Mammary epithelial cell (primary cell): ENCODE measurements at regions of chr3 and their contacts with region 1.

Region 1: DNA sequence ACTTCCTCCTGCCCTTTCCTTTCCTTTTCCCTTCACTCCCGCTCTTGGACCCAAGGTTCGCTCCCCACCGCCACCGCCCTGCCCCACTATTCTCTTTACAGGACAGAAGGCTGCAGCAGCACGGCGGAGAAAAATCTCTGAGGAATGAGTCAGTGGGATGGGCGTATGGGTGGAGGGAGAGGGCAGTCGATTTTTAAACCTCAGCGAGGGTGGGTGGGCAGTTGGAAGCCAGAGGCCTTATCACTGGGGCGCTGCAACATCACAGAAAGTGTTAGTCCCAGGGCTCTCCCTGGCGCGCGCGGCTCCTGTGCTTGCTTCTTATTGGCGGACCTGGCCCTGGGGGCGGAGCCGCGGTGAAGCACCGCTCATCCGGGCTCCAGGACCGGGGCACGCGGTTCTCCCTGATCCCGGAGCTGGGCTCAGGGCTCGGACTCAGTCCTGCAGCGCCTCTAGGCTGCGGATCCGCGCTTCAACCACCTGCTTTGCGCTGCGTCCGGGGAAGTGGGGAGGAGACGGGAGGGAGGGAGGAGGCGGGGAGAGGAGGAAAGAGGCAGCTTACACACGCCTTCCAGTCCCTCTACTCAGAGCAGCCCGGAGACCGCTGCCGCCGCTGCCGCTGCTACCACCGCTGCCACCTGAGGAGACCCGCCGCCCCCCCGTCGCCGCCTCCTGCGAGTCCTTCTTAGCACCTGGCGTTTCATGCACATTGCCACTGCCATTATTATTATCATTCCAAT is at the start of gene ALCAM:
- DNase-seq: peak; percentile 99
- H3K4me3 ChIP-seq: peak within 1 kb of the TSS; percentile 75 to 91 (median 82)
- H3K27ac ChIP-seq: peak within 1 kb of the TSS; percentile 98
- H3K4me1 ChIP-seq: peaks cover 39% of the 10 kb centered on the region
- H3K27me3 ChIP-seq: no peaks in the 10 kb centered on the region
- CTCF ChIP-seq: peak; percentile 55 to 82
- total RNA-seq, gene ALCAM: 67.6 to 88.4 TPM

Region 2: DNA sequence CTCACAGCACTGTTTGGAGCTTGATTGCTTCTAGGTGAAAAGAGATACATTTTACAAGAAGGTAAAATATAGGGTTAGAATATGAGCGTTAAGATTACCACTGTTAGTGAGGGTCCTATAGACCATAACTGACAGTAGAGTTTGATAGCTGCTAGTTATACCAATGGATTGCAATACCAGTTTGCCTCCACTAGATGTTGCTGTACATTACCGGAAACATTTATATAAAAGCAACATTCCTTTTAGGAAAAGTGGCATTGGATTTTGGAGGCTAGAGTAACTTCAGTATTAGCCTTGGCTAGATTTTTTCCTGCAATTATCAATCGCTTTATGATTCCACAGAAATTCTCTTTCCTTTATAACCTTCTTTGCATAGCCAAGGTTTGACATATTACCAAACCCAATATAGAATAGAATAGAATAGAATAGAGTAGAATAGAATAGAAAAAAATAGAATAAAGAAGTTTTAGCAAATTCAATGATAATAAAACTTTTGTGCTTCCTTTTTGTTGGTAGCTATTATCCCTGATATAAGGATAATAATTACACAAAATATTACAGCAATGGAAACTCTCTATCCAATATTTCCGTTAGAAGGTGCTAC is 1093.3 kb before region 1 on chr3:
- CTCF ChIA-PET with region 1: no interaction called
- dilution Hi-C with region 1: no loop called
- in situ Hi-C with region 1: no loop called
- intact Hi-C with region 1: loop called (anchors 1 kb)
- DNase-seq: peak; percentile 17
- H3K4me3 ChIP-seq: no peak overlapping the region
- H3K27ac ChIP-seq: no peak overlapping the region
- H3K4me1 ChIP-seq: no peaks in the 10 kb centered on the region
- H3K27me3 ChIP-seq: no peaks in the 10 kb centered on the region
- CTCF ChIP-seq: peak; percentile 80 to 84

Region 3: DNA sequence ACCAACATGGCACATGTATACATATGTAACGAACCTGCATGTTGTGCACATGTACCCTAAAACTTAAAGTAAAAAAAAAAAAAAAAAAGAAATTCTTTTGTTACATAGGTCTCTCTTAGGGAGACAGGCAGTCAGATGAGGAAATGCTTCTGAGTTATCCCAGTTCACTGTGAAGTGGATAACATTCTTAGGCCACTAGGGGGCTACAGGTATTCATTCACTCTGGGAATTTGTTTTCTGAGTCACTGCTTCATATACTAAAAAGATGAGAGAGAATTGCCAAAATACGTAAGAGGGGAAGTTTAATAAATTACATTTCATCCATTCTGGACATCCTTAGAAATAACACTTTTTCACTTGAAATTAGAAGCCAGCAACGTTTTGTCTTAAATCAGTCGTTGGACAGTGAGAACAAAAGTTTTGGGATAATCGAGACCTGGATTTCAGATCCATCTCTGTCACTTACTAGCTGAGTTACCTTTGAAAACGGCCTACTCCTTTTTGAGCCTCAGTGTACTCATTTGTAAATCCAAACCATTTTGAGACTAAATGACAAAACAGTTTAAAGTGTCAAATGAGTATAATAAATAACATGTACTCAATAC is 738.2 kb before region 1 on chr3:
- CTCF ChIA-PET with region 1: no interaction called
- dilution Hi-C with region 1: no loop called
- in situ Hi-C with region 1: no loop called
- intact Hi-C with region 1: loop called (anchors 1 kb)
- DNase-seq: peak; percentile 55
- H3K4me3 ChIP-seq: no peak overlapping the region
- H3K27ac ChIP-seq: peak overlapping the region; percentile 69
- H3K4me1 ChIP-seq: peaks cover 20% of the 10 kb centered on the region
- H3K27me3 ChIP-seq: no peaks in the 10 kb centered on the region
- CTCF ChIP-seq: peak; percentile 76 to 84

Region 4: GRCh38 chr3:104987859-104988258 is 378.6 kb before region 1 on chr3:
- CTCF ChIA-PET with region 1: no interaction called
- dilution Hi-C with region 1: no loop called
- in situ Hi-C with region 1: no loop called
- intact Hi-C with region 1: loop called (anchors 2 kb)
- DNase-seq: no peak
- H3K4me3 ChIP-seq: no peak overlapping the region
- H3K27ac ChIP-seq: no peak overlapping the region
- H3K4me1 ChIP-seq: no peaks in the 10 kb centered on the region
- H3K27me3 ChIP-seq: no peaks in the 10 kb centered on the region
- CTCF ChIP-seq: peak; percentile 10 to 21

Region 5: DNA sequence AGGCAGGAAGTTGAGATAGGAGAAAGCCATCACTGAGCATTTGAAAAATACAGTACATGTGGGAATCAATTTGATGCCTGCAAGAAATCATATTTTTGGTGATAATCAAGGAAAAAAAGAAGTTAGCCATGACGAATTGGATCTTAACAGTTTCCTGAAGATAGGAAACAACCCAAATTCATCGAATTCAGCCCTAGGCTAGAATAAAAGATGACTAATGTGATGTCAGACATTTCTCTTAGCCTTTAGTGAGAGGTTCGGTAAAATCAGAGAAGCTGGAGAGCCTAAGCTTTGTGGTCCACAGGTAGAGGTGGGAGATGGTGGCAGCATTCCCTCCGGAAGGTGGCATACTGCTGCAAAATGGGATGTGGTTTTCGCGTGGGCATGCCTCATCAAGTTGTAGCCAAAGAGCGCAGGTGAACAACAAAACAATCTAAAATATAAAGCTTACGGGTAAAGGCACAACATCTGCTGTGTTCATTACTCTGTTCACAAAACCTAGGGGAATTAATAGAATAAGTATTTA is 143.9 kb before region 1 on chr3:
- CTCF ChIA-PET with region 1: no interaction called
- dilution Hi-C with region 1: no loop called
- in situ Hi-C with region 1: no loop called
- intact Hi-C with region 1: loop called (anchors 2 kb)
- DNase-seq: peak; percentile 42
- H3K4me3 ChIP-seq: no peak overlapping the region
- H3K27ac ChIP-seq: no peak overlapping the region
- H3K4me1 ChIP-seq: no peaks in the 10 kb centered on the region
- H3K27me3 ChIP-seq: no peaks in the 10 kb centered on the region
- CTCF ChIP-seq: peak; percentile 32 to 50

Region 6: GRCh38 chr3:105527949-105528348 is 161.5 kb after region 1 on chr3:
- CTCF ChIA-PET with region 1: interaction called, 14 read pairs
- dilution Hi-C with region 1: no loop called
- in situ Hi-C with region 1: loop called in 1 of 2 experiments (anchors 10 kb)
- intact Hi-C with region 1: no loop called
- DNase-seq: peak; percentile 87
- H3K4me3 ChIP-seq: no peak overlapping the region
- H3K27ac ChIP-seq: peak overlapping the region; percentile 49
- H3K4me1 ChIP-seq: peaks cover 28% of the 10 kb centered on the region
- H3K27me3 ChIP-seq: no peaks in the 10 kb centered on the region
- CTCF ChIP-seq: no peak